Activated CD4-positive, alpha-beta T cell treated with anti-CD3 and anti-CD28 coated beads, Interleukin-2, amount 10 ng/mL, durations not matched to agents 24 days and 14 days (primary cell): ENCODE measurements at regions of chr20 and their contacts with region 1.

Region 1: DNA sequence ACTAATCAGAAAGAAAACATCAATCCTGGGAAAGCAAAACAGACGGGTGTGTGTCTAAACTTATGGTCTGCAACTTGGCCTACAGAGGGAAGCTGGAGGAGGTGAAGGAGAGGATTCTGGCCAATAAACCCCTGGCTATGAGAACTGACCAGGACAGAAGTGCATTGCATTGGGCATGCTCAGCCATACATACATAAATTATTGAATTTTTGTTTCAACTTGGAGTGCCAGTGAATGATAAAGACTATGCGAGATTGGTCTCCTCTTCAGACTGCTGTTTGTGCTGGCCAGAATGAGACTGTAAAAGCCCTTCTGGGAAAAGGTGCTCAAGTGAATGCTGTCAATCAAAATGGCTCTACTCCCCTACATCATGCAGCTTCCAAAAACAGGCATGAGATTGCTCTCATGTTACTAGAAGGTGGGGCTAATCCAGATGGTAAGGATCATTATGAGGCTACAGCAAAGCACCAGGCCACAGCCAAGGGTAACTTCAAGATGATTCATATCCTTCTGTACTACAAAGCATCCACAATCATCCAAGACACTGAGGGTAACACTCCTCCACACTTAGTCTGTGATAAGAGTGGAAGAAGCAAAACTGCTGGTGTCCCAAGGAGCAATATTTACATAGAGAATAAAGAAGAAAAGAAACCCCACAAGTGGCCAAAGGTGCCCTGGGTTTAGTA is 17.4 kb downstream of the ADNP start:
- DNase-seq: peak; percentile 67
- H3K4me3 Mint-ChIP-seq: no peak overlapping the region
- H3K27ac Mint-ChIP-seq: peak overlapping the region; percentile 59
- H3K4me1 Mint-ChIP-seq: peaks cover 59% of the 10 kb centered on the region
- H3K27me3 Mint-ChIP-seq: no peaks in the 10 kb centered on the region

Region 2: GRCh38 chr20:50790651-50791277 is 123.1 kb before region 1 on chr20:
- intact Hi-C with region 1: loop called (anchors 5 kb)
- DNase-seq: peak; percentile 93
- H3K4me3 Mint-ChIP-seq: no peak overlapping the region
- H3K27ac Mint-ChIP-seq: peak overlapping the region; percentile 69
- H3K4me1 Mint-ChIP-seq: peaks cover 11% of the 10 kb centered on the region
- H3K27me3 Mint-ChIP-seq: peaks cover 4% of the 10 kb centered on the region

Region 3: DNA sequence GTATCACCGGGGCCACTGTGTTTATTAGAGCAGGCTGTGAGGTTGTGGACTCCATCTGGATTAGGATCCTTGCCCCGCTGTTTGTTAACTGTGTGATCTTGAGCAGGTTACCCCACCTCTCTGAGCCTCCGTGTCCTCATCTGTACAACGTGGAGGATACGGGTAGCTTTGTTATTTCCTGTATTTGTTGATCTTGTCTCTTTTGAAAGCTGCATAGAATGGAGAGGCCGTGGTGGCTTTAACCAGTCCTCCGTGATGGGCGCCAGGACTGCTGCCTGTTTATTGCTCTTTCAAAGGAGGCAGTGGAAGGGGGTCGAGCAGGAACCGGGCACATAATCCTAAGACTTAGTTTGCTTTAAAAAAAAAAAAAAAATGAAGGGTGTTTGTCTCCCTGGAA is 96.1 kb before region 1 on chr20:
- intact Hi-C with region 1: loop called (anchors 1 kb)
- DNase-seq: no peak
- H3K4me3 Mint-ChIP-seq: no peak overlapping the region
- H3K27ac Mint-ChIP-seq: peak overlapping the region; percentile 96
- H3K4me1 Mint-ChIP-seq: peaks cover 30% of the 10 kb centered on the region
- H3K27me3 Mint-ChIP-seq: no peaks in the 10 kb centered on the region

Region 4: GRCh38 chr20:50892394-50892793 is 21.4 kb before region 1 on chr20:
- intact Hi-C with region 1: loop called (anchors 2 kb)
- DNase-seq: no peak
- H3K4me3 Mint-ChIP-seq: no peak overlapping the region
- H3K27ac Mint-ChIP-seq: peak overlapping the region; percentile 40
- H3K4me1 Mint-ChIP-seq: peaks cover 19% of the 10 kb centered on the region
- H3K27me3 Mint-ChIP-seq: no peaks in the 10 kb centered on the region

Region 5: GRCh38 chr20:50929299-50930138 is 15.7 kb after region 1 on chr20:
- intact Hi-C with region 1: loop called (anchors 2 kb)
- DNase-seq: peak; percentile 97
- H3K4me3 Mint-ChIP-seq: peak overlapping the region; percentile 94
- H3K27ac Mint-ChIP-seq: peak overlapping the region; percentile 98
- H3K4me1 Mint-ChIP-seq: peaks cover 46% of the 10 kb centered on the region
- H3K27me3 Mint-ChIP-seq: no peaks in the 10 kb centered on the region

Region 6: DNA sequence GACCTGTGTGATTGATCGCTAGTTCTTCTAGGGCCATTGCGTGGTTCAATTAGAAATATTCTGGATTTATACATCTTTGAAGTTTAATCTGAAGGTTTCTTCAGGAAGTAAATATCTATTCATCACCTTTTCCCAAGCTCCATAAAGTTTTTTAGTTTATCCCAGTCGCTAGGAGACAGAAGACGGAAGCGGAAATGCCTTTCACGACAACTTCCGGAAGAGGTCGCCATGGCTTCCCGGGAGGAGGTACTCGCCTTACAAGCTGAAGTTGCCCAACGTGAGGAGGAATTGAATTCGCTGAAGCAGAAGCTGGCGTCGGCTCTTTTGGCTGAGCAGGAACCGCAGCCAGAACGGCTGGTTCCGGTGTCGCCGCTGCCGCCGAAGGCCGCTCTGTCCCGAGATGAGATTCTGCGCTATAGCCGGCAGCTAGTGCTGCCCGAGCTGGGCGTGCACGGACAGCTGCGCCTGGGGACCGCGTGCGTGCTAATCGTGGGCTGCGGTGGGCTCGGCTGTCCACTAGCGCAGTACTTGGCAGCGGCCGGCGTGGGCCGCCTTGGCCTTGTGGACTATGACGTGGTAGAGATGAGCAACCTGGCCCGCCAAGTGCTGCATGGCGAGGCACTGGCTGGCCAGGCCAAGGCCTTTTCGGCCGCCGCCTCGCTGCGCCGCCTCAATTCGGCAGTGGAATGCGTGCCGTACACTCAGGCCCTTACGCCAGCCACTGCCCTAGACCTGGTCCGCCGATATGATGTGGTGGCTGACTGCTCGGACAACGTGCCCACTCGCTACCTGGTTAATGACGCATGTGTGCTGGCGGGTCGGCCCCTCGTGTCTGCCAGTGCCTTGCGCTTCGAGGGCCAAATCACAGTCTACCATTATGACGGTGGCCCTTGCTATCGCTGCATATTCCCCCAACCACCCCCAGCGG is 45.0 kb after region 1 on chr20 and contains the start of gene MOCS3:
- intact Hi-C with region 1: loop called (anchors 5 kb)
- DNase-seq: peak; percentile 95
- H3K4me3 Mint-ChIP-seq: peak within 1 kb of the TSS; percentile 99
- H3K27ac Mint-ChIP-seq: peak within 1 kb of the TSS; percentile 96
- H3K4me1 Mint-ChIP-seq: peaks cover 28% of the 10 kb centered on the region
- H3K27me3 Mint-ChIP-seq: no peaks in the 10 kb centered on the region
- total RNA-seq, gene MOCS3: 5.7 and 6.3 TPM in 2 replicates